ENCODE measurements at regions of chr1 and their contacts with region 1.

Region 1: GRCh38 chr1:58652651-58653184 is 47.1 kb downstream of the MYSM1 start:
- DNase-seq: peak; percentile 74
- H3K4me3 Mint-ChIP-seq: no peak overlapping the region
- H3K27ac Mint-ChIP-seq: no peak overlapping the region
- H3K4me1 Mint-ChIP-seq: peaks cover 17% of the 10 kb centered on the region
- H3K27me3 Mint-ChIP-seq: no peaks in the 10 kb centered on the region

Region 2: GRCh38 chr1:56831871-56832693 is 1820.6 kb before region 1 on chr1:
- CTCF ChIA-PET with region 1: no interaction called
- intact Hi-C with region 1: loop called (anchors 1 kb)
- DNase-seq: peak; percentile 78
- H3K4me3 Mint-ChIP-seq: no peak overlapping the region
- H3K27ac Mint-ChIP-seq: no peak overlapping the region
- H3K4me1 Mint-ChIP-seq: peaks cover 6% of the 10 kb centered on the region
- H3K27me3 Mint-ChIP-seq: peaks cover 22% of the 10 kb centered on the region

Region 3: DNA sequence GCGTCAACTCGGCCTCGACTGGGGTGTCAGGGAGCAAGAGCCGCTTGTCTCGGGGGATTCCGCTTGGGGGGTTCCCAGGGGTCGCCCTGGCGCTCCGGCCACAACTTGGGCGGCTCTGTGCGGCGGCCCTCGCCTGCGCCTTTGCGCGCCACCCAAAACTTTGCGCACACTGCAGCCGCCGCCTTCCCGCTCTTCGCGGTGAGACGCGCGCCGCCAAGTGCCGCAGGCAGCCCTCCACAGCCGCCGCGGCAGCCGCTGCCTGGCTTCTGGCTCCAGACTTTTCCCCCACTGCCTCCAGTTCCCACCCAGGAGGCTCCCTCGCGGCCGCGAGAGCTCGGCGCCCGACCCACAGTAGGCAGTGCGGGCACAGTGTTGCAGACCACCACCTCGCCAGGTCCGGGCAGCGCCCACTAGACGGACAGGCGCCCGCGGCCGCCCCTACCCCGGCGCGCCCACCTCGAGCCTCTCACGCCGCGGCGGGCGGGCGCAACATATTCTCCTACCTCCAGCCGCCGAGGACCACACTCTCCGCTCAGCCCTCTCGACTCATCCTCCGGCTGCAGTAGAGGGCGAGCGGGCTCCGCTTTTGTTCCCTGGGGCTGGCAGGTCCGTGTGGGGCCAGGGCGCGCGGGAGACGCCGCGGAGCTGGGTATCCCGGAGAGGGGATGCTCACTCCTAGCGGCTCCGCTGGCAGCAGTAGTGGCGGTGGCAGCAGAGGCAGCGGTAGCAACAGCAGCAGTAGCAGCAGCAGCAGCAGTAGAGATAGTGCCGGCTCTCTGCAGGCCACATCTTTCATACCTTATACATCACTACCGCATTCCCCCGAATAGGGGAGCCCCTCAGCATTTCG is 402.8 kb before region 1 on chr1:
- CTCF ChIA-PET with region 1: no interaction called
- intact Hi-C with region 1: loop called (anchors 10 kb)
- DNase-seq: peak; percentile 29
- H3K4me3 Mint-ChIP-seq: peak overlapping the region; percentile 60
- H3K27ac Mint-ChIP-seq: no peak overlapping the region
- H3K4me1 Mint-ChIP-seq: peaks cover 15% of the 10 kb centered on the region
- H3K27me3 Mint-ChIP-seq: peaks cover 32% of the 10 kb centered on the region

Region 4: DNA sequence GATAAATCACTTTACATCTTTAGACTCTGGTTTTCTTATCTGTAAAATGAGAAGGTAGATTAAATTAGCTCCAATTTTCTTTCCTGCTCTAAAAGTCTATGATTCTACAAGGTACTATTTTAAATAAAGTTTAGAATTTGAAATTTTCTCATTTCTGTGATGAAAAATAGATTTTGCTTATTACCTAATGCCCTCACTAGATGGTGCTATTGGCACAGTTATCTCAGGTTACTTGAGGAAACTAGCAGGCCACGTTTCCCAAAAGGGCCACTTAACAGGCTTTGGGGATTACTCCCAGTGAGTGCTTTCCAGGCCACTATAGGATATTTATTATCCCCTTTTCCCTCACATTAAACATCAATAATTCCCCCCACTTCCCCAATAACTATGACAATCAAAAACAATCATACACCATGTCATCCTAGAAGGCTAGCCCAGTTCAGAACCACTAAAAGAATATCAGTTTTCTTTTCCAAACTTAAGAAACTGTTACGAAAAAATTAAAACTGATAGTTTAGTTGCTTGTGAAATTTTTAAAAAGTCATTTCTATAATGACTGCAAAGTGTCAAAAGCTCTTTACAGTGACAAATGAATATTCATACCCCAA is 136.8 kb before region 1 on chr1:
- CTCF ChIA-PET with region 1: interaction called, 55 read pairs
- intact Hi-C with region 1: loop called (anchors 1 kb)
- DNase-seq: peak; percentile 35
- H3K4me3 Mint-ChIP-seq: no peak overlapping the region
- H3K27ac Mint-ChIP-seq: peak overlapping the region; percentile 38
- H3K4me1 Mint-ChIP-seq: peaks cover 7% of the 10 kb centered on the region
- H3K27me3 Mint-ChIP-seq: no peaks in the 10 kb centered on the region

Region 5: DNA sequence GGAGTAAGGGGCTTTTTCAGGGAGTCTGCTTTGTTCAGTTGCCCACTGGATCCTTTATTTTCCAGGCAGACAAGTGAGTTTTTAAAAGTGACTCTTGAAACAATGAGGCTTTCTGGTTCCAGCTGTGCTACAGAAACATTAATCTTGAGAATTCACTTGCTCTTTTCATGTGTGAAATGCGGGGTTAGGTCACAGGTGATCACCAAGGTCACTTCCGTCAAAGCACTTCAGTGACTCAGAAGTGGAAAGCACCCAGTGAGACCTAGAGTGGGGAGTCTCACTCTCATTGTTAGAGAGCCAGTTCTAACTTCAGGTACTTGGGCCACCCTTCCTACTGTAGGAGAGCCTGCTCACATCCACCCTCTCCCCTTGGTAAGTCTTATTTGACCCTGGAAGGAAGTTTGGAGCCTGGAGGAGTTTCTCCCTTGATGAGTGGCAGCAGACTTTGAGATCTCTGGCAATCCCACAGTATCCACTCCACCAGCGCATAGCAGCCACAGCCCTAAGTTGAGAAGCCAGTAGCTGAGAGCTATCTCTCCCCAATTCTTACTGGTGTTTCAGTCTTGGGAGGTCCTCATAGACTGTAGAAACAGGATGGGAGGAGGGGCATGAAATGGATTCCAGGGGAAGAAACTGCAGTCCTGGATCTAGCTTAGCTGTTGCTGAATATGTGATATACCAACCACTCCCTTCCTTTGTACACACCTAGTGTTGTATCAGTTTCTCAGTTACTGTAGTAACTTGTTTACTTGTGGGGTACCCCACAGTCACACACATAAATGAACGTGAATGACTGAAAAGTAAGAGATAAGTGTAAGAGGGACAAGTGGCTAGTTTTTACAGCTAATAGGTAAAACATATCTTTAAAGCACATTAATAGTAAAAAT is 78.8 kb before region 1 on chr1:
- CTCF ChIA-PET with region 1: interaction called, 3 read pairs
- intact Hi-C with region 1: loop called (anchors 2 kb)
- DNase-seq: peak; percentile 72
- H3K4me3 Mint-ChIP-seq: no peak overlapping the region
- H3K27ac Mint-ChIP-seq: peak overlapping the region; percentile 11
- H3K4me1 Mint-ChIP-seq: peaks cover 33% of the 10 kb centered on the region
- H3K27me3 Mint-ChIP-seq: peaks cover 44% of the 10 kb centered on the region

Region 6: GRCh38 chr1:58664881-58665280 is 12.2 kb after region 1 on chr1:
- CTCF ChIA-PET with region 1: interaction called, 12 read pairs
- intact Hi-C with region 1: no loop called
- DNase-seq: no peak
- H3K4me3 Mint-ChIP-seq: no peak overlapping the region
- H3K27ac Mint-ChIP-seq: no peak overlapping the region
- H3K4me1 Mint-ChIP-seq: no peaks in the 10 kb centered on the region
- H3K27me3 Mint-ChIP-seq: no peaks in the 10 kb centered on the region

Region 7: GRCh38 chr1:59759156-59759925 is 1106.6 kb after region 1 on chr1:
- CTCF ChIA-PET with region 1: no interaction called
- intact Hi-C with region 1: loop called (anchors 2 kb)
- DNase-seq: peak; percentile 83
- H3K4me3 Mint-ChIP-seq: peak overlapping the region; percentile 47
- H3K27ac Mint-ChIP-seq: peak overlapping the region; percentile 53
- H3K4me1 Mint-ChIP-seq: peaks cover 4% of the 10 kb centered on the region
- H3K27me3 Mint-ChIP-seq: no peaks in the 10 kb centered on the region

Measured in activated naive CD4-positive, alpha-beta T cell treated with anti-CD3 and anti-CD28 coated beads for 36 hours (primary cell).